ENCODE measurements at regions of chr11 and their contacts with region 1.

Region 1: DNA sequence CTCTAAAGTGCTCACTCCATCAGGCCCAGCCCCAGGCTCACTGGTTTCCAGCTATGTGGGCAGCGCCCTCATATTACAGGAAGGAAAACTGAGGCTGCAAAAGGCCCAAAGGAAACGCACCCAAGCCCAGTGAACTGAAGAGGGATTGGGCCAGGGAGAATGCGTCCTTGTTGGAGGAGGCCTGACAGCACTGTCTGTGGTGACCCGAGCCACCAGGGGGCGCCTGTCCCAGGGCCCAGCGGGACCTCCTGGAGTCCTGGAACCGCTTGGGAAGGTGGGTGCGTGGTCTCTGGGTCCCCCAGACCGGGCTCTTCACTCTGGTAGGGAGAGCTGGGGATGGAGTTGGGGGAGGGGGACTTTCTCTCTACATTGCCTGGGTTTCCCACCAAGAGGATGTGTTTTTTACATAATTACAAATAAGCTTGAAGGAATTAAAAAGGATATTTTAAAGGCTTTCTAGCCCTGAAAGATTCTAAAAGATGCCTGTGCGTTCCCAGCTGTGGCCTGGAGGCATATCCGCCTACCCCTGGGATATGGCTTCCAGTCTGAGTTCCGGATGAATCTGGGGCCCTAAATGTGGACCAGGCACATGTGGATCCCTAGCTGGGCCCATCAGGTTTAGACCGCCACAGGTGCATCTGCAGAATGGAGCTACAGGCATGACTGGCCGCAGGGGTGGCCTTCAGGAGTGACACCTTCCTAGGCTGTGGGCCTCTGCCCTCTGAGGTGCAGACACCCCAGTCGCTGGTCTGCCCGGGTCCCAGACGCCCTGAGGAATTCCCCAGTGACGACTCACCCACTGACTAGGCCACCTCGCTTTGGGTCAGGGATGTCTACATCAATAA is 4.2 kb downstream of the SPI1 start:
- DNase-seq: peak; percentile 92

Region 2: DNA sequence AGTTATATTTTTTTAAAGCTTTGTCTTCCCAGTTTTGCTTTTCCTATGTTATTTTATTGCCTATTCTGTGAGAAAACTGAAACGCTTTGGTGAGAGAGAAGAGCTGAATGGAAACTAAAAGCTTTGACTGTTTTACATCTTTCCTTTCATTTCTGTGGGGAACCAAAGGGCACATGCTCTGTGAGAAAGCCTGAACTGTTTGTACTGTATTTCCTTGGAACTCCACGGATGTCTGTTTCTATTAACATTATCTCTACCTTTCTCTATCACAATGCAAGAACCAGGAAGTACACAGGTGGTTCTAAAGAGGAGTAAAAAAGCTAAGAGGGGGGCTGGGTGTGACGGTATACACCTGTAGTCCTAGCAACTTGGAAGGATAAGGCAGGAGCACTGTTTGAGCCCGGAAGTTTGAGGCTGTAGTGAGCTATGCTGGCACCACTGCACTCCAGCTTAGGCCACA is 135.0 kb after region 1 on chr11:
- CTCF ChIA-PET with region 1: interaction called, 10 read pairs
- POLR2A ChIA-PET with region 1: no interaction called
- DNase-seq: no peak